ENCODE measurements at regions of chr1 and their contacts with region 1.

Region 1: DNA sequence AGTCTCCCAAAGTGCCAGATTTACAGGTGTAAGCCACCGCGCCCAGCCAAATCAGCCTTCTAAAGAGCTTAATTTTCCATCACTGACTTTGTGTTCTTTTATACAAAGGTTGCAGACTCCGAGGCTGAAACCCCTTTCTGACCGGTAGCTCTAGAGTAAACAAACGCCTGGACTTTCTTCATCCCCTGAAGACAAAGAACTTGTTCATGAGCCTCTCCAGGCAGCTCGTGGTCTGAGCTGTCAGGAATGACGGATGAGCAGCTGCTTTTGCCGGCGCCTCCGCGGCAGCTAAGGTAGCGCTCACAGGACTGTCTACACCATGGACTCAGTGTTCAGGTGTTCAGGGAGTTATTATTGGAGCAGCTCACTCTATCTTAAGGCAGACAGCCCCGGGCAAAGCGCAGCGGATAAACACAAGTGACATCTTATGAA is 128.5 kb upstream of the ERRFI1 start:
- DNase-seq: no peak
- ATAC-seq: no peak
- H3K4me3 ChIP-seq: no peak overlapping the region
- H3K4me3 Mint-ChIP-seq: no peak overlapping the region
- H3K27ac ChIP-seq: no peak overlapping the region
- H3K27ac Mint-ChIP-seq: peak overlapping the region; percentile 34
- H3K4me1 ChIP-seq: peaks cover 53% of the 10 kb centered on the region
- H3K4me1 Mint-ChIP-seq: peaks cover 51% of the 10 kb centered on the region
- H3K27me3 ChIP-seq: no peaks in the 10 kb centered on the region
- H3K27me3 Mint-ChIP-seq: peaks cover 15% of the 10 kb centered on the region
- CTCF ChIP-seq: no peak

Region 2: GRCh38 chr1:7961216-7962015 is 193.2 kb before region 1 on chr1 and contains the start of gene PARK7:
- CTCF ChIA-PET with region 1: no interaction called
- POLR2A ChIA-PET with region 1: interaction called, 3 read pairs
- intact Hi-C with region 1: loop called in 1 of 2 experiments (anchors 5 kb)
- DNase-seq: peak; percentile 99 to 100 (median 100)
- ATAC-seq: peak; percentile 95
- H3K4me3 ChIP-seq: peak within 1 kb of the TSS; percentile 84
- H3K4me3 Mint-ChIP-seq: peak within 1 kb of the TSS; percentile 99
- H3K27ac ChIP-seq: peak within 1 kb of the TSS; percentile 88 to 94
- H3K27ac Mint-ChIP-seq: peak within 1 kb of the TSS; percentile 98
- H3K4me1 ChIP-seq: peaks cover 56% of the 10 kb centered on the region
- H3K4me1 Mint-ChIP-seq: peaks cover 78% of the 10 kb centered on the region
- H3K27me3 ChIP-seq: no peaks in the 10 kb centered on the region
- H3K27me3 Mint-ChIP-seq: no peaks in the 10 kb centered on the region
- CTCF ChIP-seq: peak; percentile 57
- total RNA-seq, gene PARK7: 57.7 to 62.4 TPM

Region 3: DNA sequence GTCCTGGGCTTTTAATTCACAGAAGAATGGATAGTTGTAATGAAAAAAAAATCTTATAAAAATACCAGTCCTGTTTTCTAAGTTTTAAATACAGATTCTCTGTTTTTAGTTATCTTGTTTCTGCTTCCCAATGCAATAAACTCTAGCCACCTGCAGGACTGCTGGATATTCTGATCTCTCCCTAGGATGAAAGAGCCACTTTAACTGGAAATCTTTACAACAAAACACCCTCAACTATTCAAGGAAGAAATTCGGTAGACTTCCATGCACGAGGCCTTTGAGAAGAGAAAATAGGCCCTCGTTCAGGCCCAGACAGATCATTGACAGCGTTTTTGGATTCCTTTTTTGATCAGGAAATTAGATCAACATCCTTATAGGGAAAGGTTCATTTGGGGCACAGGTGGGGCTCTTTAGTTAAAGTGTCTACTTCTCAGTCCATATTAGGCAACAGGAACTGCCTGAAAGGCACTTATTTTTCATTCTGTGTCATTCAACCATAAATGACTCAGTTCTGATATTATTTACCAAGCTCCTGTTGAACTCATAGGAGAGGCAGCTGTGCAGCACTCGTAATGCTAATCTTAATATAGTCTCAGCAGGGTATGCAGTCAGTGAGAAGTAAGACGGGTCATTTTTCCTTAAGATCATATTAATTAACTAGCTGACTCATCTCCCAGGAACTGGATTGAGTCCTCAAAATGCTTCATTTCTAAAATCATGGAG is 57.4 kb before region 1 on chr1:
- CTCF ChIA-PET with region 1: no interaction called
- POLR2A ChIA-PET with region 1: no interaction called
- intact Hi-C with region 1: loop called in 1 of 2 experiments (anchors 2 kb)
- DNase-seq: peak in 4 of 14 experiments; percentile 5 to 54 (median 36)
- ATAC-seq: peak; percentile 89
- H3K4me3 ChIP-seq: no peak overlapping the region
- H3K4me3 Mint-ChIP-seq: no peak overlapping the region
- H3K27ac ChIP-seq: no peak overlapping the region
- H3K27ac Mint-ChIP-seq: peak overlapping the region; percentile 50
- H3K4me1 ChIP-seq: no peaks in the 10 kb centered on the region
- H3K4me1 Mint-ChIP-seq: peaks cover 11% of the 10 kb centered on the region
- H3K27me3 ChIP-seq: no peaks in the 10 kb centered on the region
- H3K27me3 Mint-ChIP-seq: peaks cover 19% of the 10 kb centered on the region
- CTCF ChIP-seq: no peak

Region 4: GRCh38 chr1:8113262-8114220 is 41.1 kb before region 1 on chr1:
- CTCF ChIA-PET with region 1: no interaction called
- POLR2A ChIA-PET with region 1: interaction called, 8 read pairs
- intact Hi-C with region 1: loop called in 1 of 2 experiments (anchors 5 kb)
- DNase-seq: peak in 1 of 14 experiments; percentile 64
- ATAC-seq: peak; percentile 44
- H3K4me3 ChIP-seq: no peak overlapping the region
- H3K4me3 Mint-ChIP-seq: peak overlapping the region; percentile 12
- H3K27ac ChIP-seq: no peak overlapping the region
- H3K27ac Mint-ChIP-seq: peak overlapping the region; percentile 79
- H3K4me1 ChIP-seq: peaks cover 7% of the 10 kb centered on the region
- H3K4me1 Mint-ChIP-seq: peaks cover 13% of the 10 kb centered on the region
- H3K27me3 ChIP-seq: no peaks in the 10 kb centered on the region
- H3K27me3 Mint-ChIP-seq: no peaks in the 10 kb centered on the region
- CTCF ChIP-seq: no peak

Region 5: DNA sequence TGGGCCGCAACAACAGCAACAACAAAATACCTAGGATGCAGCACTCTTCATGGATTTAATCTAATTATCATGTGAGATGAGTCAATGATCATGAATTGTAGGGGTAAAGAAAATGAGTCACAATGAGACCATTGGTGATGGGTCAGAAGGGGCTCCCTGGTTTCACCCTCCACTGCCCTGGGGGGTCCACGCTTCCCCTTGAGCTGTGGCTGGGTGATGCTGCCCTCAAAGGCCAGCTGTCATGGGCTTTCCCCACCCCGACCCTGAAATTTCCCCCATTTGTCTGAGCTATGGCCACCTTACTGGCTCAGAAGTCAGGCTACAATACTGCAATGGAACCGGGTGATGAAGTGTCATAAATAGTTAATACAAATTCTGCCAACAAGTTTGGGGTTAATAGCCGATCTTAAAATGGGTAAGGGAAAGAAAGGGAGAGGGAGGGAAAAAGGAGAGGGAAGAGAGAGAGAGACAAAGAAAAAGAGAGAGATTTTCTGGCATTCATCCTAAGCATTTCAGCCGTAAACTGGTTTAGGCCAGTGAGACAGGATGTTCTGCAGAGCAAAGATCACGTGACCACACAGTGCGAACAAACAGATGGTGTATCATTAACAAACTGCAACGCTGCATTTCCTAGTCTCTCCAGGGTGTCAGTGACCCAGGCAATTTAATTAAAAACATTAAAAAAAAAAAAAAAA is 14.9 kb after region 1 on chr1:
- CTCF ChIA-PET with region 1: no interaction called
- POLR2A ChIA-PET with region 1: interaction called, 52 read pairs
- intact Hi-C with region 1: loop called in 1 of 2 experiments (anchors 2 kb)
- DNase-seq: peak in 10 of 14 experiments; percentile 32 to 94 (median 60)
- ATAC-seq: peak; percentile 96
- H3K4me3 ChIP-seq: no peak overlapping the region
- H3K4me3 Mint-ChIP-seq: peak overlapping the region; percentile 35
- H3K27ac ChIP-seq: peak overlapping the region; percentile 14 to 81
- H3K27ac Mint-ChIP-seq: peak overlapping the region; percentile 85
- H3K4me1 ChIP-seq: peaks cover 48% of the 10 kb centered on the region
- H3K4me1 Mint-ChIP-seq: peaks cover 39% of the 10 kb centered on the region
- H3K27me3 ChIP-seq: no peaks in the 10 kb centered on the region
- H3K27me3 Mint-ChIP-seq: no peaks in the 10 kb centered on the region
- CTCF ChIP-seq: no peak

Region 6: DNA sequence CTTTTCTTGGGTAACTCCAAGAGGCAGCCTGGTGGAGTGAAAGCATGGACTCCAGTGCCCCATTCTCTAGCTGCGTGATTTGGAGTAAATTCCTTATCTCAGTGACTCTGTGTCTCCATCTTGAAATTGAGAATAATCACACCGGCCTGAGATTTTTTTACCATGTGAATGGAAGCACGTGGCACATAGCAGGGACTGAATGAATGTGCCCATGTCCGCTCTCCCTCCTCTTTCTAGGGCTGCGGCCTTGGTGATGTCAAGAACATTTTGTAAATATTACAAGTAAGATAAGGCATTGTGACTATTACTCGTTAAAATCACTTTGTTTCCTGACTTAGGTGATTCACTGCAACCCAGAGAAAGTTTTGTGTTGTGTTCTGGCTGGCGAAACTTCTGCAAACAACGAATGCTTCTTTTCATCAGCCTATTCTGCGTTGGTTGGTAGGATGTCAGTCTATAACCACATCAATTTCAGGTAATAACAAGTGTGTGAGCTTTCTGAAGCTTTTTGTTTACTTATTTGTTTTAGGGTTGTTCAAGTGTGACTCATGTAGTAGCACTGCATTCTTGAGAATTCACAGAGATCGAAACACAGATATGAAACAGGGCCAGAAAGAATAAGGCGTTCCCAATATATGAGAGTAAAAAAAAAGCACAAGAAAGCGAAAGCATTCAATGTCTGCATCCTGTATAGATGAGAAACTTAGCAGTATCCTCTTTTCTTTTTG is 27.6 kb after region 1 on chr1:
- CTCF ChIA-PET with region 1: no interaction called
- POLR2A ChIA-PET with region 1: interaction called, 5 read pairs
- intact Hi-C with region 1: loop called in 1 of 2 experiments (anchors 1 kb)
- DNase-seq: peak in 7 of 14 experiments; percentile 11 to 83 (median 27)
- ATAC-seq: peak; percentile 89
- H3K4me3 ChIP-seq: peak overlapping the region; percentile 24
- H3K4me3 Mint-ChIP-seq: peak overlapping the region; percentile 1
- H3K27ac ChIP-seq: peak overlapping the region in 1 of 2 donors; percentile 25
- H3K27ac Mint-ChIP-seq: peak overlapping the region; percentile 70
- H3K4me1 ChIP-seq: peaks cover 23% of the 10 kb centered on the region
- H3K4me1 Mint-ChIP-seq: peaks cover 19% of the 10 kb centered on the region
- H3K27me3 ChIP-seq: no peaks in the 10 kb centered on the region
- H3K27me3 Mint-ChIP-seq: no peaks in the 10 kb centered on the region
- CTCF ChIP-seq: no peak

Measured in CD4-positive, alpha-beta T cell (primary cell).